Activated CD4-positive, alpha-beta T cell treated with anti-CD3 and anti-CD28 coated beads, Interleukin-2, amount 10 ng/mL, durations not matched to agents 7 days and 5 days (primary cell): ENCODE measurements at regions of chr5 and their contacts with region 1.

Region 1: DNA sequence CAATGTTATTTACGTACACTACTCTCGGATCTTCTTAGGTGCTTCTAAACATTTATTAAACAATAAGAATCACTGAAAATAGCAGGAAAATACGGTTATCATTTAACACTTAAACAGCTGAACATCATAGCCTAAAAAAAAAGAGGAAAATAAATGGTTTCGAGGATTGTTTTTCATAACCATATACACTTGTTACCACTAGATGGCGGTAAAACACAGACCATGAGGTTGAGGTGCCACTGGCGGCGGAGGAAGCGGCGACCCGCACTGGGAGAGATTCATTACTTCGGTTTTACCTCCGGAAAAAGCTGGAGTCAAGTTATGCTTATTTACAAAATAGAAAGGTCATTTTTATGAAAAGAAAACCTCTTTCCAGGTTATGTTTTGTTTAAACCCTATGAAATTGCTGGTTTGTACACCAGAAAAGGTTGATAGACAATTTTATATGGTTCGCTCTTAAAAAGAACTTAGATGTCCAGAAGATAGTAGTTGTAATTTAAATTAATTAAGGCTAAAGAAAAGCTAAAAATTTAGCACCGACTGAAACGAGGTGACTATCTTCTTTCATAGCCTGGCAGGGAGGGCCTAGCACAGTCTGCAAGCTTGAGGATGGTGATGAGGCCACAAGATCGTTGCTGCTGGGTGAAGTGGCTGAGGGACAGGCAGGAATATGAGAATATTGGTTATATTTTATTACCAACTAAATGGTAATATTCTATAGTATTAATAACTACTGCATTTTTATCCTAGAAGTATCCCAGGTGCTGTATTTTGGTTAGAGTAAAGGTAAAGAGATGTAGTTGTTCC is 605.7 kb downstream of the RAB3C start:
- DNase-seq: peak; percentile 75
- H3K4me3 Mint-ChIP-seq: no peak overlapping the region
- H3K27ac Mint-ChIP-seq: no peak overlapping the region
- H3K4me1 Mint-ChIP-seq: peaks cover 3% of the 10 kb centered on the region
- H3K27me3 Mint-ChIP-seq: peaks cover 22% of the 10 kb centered on the region

Region 2: GRCh38 chr5:58886315-58887207 is 302.1 kb before region 1 on chr5:
- CTCF ChIA-PET with region 1: interaction called, 13 read pairs
- POLR2A ChIA-PET with region 1: no interaction called
- DNase-seq: peak; percentile 65
- H3K4me3 Mint-ChIP-seq: no peak overlapping the region
- H3K27ac Mint-ChIP-seq: peak overlapping the region; percentile 0
- H3K4me1 Mint-ChIP-seq: peaks cover 34% of the 10 kb centered on the region
- H3K27me3 Mint-ChIP-seq: peaks cover 7% of the 10 kb centered on the region

Region 3: DNA sequence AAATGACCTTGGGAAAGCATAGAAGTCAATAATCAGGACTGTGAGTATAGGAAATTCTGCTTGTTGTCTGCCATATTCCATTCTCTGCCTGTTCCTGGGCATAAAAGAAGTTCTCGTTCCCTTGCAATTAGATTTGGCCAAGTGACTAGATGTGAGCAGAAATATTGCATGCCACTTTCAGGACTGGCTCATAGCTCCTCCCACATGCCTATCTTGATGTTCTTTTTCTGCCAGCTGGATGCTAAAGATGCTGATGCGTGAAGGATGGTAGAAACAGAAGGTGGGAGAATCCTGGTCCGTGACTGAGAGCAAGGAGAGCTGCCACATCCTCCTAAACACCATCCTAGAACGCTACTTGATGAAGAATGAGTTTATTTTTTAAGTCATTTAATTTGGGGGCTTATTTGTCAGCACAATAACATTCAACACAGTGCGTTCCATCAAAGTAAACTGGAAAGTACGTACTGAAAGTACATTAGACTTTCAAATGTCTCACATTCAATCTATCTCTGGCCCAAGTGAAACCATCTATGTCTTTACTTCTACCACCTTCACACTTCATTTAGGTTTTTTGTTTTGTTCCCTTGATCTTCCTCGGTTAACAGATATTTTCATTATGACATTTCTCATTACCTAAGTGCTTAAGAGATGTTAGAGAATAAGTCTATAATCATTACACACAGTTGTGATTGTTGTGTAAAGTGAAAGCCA is 42.8 kb after region 1 on chr5:
- CTCF ChIA-PET with region 1: no interaction called
- POLR2A ChIA-PET with region 1: no interaction called
- DNase-seq: no peak
- H3K4me3 Mint-ChIP-seq: no peak overlapping the region
- H3K27ac Mint-ChIP-seq: no peak overlapping the region
- H3K4me1 Mint-ChIP-seq: no peaks in the 10 kb centered on the region
- H3K27me3 Mint-ChIP-seq: peaks cover 25% of the 10 kb centered on the region

Region 4: GRCh38 chr5:59380350-59380951 is 191.8 kb after region 1 on chr5:
- CTCF ChIA-PET with region 1: interaction called, 11 read pairs
- POLR2A ChIA-PET with region 1: interaction called, 14 read pairs
- DNase-seq: peak; percentile 22
- H3K4me3 Mint-ChIP-seq: no peak overlapping the region
- H3K27ac Mint-ChIP-seq: no peak overlapping the region
- H3K4me1 Mint-ChIP-seq: peaks cover 2% of the 10 kb centered on the region
- H3K27me3 Mint-ChIP-seq: peaks cover 11% of the 10 kb centered on the region